ENCODE measurements at regions of chr22 and their contacts with region 1.

Region 1: DNA sequence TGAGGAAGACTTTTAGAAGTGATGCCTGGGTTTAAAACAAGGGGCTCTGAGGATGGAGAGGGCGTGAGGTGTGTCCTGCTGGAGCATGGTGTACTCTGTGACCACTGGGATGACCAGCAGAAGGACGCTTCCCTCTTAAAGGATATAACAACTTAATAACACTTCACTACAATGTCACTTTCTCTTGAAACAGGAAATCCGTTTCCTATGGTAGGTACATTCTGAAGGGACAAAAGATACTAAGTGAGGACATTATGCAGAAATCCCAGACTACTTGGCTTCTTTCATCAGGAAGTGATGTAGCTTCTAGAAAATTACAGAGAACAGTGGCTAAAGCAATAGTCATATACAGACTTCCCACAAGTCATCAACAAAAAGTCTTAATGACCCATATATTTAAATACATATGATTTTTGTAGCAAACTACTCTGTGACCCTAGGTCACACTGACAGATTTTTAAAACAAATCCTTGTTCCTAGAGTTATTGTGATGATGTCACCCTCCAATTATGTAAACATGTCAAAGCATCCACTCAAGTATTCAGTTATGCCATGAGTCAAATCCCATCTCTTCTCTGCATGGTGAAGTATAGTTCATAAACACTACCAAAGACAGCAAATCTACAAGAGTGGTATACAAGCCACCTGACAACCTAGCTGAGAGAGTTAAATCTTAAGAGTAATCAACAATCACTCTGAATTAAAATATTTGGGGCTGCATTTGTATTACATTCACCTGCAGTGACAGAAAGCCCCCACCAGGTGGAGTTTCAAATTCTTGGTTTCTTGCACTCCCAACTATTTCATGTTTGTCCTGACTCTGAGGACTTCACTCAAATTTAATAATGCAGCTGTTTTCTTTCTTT is 32.8 kb downstream of the PITPNB start:
- DNase-seq: peak; percentile 51 to 69
- H3K4me3 ChIP-seq: no peak overlapping the region
- H3K27ac ChIP-seq: peak overlapping the region in 4 of 5 donors; percentile 36 to 71 (median 56)
- H3K4me1 ChIP-seq: peaks cover 7 to 69% (median 36%) of the 10 kb centered on the region in 4 donors
- H3K27me3 ChIP-seq: no peaks in the 10 kb centered on the region
- CTCF ChIP-seq: peak in 6 of 7 experiments; percentile 43 to 88 (median 84)
- EP300 ChIP-seq: no peak
- POLR2A ChIP-seq: no peak

Region 2: DNA sequence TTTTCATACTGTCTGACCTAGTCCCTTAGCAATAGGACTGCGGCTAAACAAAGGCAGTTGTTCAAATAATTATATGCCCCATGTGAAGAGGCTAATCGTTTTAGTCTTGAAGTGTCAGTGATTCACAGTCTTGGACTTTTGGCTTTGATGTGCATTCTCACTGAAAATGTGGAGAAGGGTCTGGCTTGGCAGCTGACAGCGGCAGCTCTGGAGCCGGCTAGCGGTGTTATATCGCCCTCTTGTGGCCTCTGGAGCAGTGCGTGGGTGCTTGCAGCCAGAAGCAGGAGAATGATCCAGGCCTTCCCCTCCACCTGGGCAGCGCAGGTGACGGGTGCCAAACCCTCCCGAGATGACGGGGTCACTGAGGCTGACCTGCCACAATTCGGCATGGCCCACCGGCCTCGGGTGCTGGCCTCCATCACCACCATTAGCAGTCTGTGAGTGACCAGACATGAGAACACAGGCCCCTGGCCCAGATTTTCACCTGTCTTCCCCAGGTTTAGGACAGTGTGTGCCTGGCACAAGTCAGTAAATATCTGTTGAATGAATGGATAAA is 123.1 kb after region 1 on chr22:
- intact Hi-C with region 1: loop called (anchors 2 kb)
- DNase-seq: peak; percentile 75 to 94
- H3K4me3 ChIP-seq: no peak overlapping the region
- H3K27ac ChIP-seq: peak overlapping the region in 2 of 5 donors; percentile 3 to 49
- H3K4me1 ChIP-seq: peaks cover 0 to 20% (median 11%) of the 10 kb centered on the region in 4 donors
- H3K27me3 ChIP-seq: no peaks in the 10 kb centered on the region
- CTCF ChIP-seq: peak in 5 of 7 experiments; percentile 80 to 93 (median 90)
- EP300 ChIP-seq: no peak
- POLR2A ChIP-seq: no peak

Region 3: GRCh38 chr22:28064920-28065319 is 178.7 kb after region 1 on chr22:
- intact Hi-C with region 1: no loop called
- DNase-seq: no peak
- H3K4me3 ChIP-seq: no peak overlapping the region
- H3K27ac ChIP-seq: no peak overlapping the region
- H3K4me1 ChIP-seq: no peaks in the 10 kb centered on the region
- H3K27me3 ChIP-seq: no peaks in the 10 kb centered on the region
- CTCF ChIP-seq: no peak
- EP300 ChIP-seq: no peak
- POLR2A ChIP-seq: no peak

Measured in stomach (tissue), 19 donors.